Right ventricle myocardium superior (tissue), 1 donor: ENCODE measurements at regions of chr1 and their contacts with region 1.

Region 1: GRCh38 chr1:228120857-228121489 is 11.9 kb upstream of the MRPL55 start:
- DNase-seq: no peak
- ATAC-seq: no peak

Region 2: DNA sequence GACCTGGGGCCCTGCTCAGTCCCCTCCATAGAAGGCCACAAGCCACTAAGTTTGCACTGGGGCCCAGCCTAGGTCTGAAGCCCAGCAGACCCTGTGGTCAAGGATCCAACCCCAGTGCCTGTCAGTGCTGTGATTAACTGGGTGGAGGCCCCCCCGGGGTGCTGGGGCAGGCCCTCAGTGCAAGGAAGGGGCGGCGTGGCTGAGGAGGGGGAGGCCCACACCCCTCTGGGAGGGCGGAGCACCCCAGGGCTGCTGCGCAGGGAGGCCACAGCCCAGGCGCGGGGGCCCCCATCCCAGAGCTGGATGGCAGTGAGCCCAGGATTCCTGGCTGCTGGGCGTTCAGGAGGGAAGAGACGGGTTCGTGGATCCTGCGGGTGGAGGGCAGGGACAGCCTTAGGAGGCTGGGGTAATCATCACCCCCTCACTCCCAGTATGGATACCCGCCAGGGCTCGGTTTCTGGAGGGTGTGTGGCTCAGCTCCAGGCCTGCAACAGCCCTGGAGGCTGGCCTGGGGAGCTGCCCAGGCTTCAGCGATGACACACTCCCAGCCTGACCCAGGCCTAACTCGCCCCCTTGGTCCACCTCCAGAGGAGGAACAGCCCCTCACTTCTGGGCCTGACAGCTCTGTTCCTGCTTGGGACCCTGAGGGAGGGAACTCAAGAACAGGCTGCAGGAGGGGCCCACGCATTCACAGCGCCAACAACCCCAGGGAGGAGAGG is 29.6 kb after region 1 on chr1:
- intact Hi-C with region 1: no loop called
- DNase-seq: peak; percentile 83
- ATAC-seq: peak; percentile 68

Region 3: DNA sequence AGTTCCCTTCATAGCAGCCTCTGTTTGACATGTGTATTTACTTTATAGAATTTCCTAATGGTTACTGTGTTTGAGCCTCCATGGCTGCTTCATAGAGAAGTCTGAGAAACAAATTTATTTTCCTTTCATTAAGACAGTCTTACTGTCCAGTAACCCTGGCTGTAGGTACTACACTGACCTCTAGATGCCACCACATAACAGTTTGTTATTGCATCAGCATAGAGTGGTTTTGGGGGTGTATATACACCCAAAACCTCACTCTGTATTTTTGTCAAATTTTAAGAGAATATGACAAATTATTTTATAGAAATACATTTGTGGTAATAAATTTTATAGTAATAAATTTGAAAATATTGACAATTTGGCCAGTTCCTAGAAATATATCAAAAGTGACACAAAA is 144.2 kb after region 1 on chr1:
- intact Hi-C with region 1: no loop called
- DNase-seq: no peak
- ATAC-seq: no peak

Region 4: GRCh38 chr1:228490120-228491078 is 369.4 kb after region 1 on chr1:
- intact Hi-C with region 1: loop called (anchors 10 kb)
- DNase-seq: peak; percentile 70
- ATAC-seq: peak; percentile 48